ENCODE measurements at regions of chr16 and their contacts with region 1.

Region 1: DNA sequence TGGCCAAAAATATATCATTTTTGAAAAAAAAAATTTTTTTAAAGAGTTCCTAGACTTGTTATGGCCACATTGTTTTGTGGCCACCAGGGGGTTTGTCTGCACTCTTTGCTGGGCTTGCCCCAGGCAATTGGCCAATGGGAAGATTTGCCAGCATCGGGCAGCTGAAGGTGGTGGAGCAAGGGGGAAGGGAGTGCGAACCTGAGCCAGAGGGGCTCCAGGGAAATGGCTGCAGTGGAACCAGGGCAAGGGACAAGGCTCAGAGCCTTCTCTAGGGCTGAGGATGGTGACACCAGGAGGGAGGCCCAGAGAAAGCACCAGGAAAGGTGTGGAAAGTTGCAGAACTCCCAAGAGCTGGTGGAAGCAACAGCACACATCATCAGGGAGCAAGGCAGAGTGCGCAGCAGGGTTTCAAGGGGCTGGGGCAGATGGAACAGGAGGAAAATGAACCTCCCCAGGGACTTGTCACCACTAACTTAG is 15.5 kb upstream of the CMIP start:
- DNase-seq: no peak
- H3K4me3 Mint-ChIP-seq: no peak overlapping the region
- H3K27ac Mint-ChIP-seq: no peak overlapping the region
- H3K4me1 Mint-ChIP-seq: peaks cover 16% of the 10 kb centered on the region
- H3K27me3 Mint-ChIP-seq: peaks cover 8% of the 10 kb centered on the region

Region 2: DNA sequence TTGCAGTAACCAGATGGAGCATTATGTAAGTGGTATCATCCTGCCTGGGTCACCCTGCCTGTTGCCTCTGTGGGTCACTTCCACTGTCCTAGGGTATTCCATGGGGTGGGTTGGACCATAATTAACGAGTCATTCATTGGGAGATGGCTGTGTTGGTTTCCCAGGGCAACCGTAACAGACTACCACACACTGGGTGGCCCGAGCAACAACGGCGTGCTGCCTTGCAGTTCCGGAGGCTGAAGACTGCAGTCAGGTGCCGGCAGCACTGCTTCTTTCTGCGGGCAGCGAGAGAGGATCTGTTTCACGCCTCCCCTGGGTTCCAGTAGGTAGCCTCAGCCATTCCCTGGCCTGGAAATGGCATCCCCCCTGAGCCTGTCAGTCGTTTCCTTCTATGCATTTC is 13.3 kb before region 1 on chr16:
- intact Hi-C with region 1: no loop called
- DNase-seq: no peak
- H3K4me3 Mint-ChIP-seq: no peak overlapping the region
- H3K27ac Mint-ChIP-seq: no peak overlapping the region
- H3K4me1 Mint-ChIP-seq: no peaks in the 10 kb centered on the region
- H3K27me3 Mint-ChIP-seq: peaks cover 8% of the 10 kb centered on the region

Region 3: DNA sequence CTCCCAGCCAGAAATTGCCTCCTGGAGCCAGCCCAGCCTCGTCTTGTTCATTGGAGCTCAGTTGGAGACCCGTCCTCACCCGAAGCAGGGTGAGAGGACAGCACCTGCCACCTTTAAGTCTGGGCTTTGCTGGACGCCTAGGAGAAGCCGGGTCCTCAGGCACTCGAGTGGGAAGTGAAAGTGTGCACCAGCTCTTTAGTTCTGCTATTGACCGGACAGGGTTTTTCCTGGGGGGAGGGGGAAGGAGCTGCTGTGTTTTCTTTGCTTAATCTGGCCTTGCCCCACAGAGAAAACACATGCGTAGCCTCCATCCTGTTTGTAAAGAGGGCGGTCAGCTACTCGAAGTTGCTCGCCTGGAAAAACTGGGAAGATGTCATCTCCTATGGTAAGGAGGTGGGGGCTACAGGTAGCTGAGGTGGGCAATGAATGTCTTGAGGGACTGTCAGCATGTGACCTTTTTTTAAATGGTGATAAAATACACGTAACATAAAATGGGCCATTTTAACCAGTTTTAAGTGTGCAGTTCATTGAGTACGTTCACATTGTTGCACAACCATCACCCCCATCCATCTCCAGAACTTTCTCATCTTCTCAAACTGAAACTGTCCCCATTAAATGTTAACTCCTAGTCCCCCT is 49.9 kb after region 1 on chr16:
- intact Hi-C with region 1: loop called (anchors 10 kb)
- DNase-seq: no peak
- H3K4me3 Mint-ChIP-seq: no peak overlapping the region
- H3K27ac Mint-ChIP-seq: no peak overlapping the region
- H3K4me1 Mint-ChIP-seq: peaks cover 68% of the 10 kb centered on the region
- H3K27me3 Mint-ChIP-seq: no peaks in the 10 kb centered on the region

Measured in activated T-helper 1 cell treated with anti-CD3 and anti-CD28 coated beads, Interleukin-12 subunit alpha, Interleukin-12 subunit beta, Interleukin-2, Interleukin-4 antibody, amounts not matched to agents 30 ng/mL and 10 ng/mL and 1 ng/mL, durations not matched to agents 14 hours and 24 hours and 36 hours (primary cell).